Posterior vena cava (tissue), 2 donors: ENCODE measurements at regions of chr12 and their contacts with region 1.

Region 1: DNA sequence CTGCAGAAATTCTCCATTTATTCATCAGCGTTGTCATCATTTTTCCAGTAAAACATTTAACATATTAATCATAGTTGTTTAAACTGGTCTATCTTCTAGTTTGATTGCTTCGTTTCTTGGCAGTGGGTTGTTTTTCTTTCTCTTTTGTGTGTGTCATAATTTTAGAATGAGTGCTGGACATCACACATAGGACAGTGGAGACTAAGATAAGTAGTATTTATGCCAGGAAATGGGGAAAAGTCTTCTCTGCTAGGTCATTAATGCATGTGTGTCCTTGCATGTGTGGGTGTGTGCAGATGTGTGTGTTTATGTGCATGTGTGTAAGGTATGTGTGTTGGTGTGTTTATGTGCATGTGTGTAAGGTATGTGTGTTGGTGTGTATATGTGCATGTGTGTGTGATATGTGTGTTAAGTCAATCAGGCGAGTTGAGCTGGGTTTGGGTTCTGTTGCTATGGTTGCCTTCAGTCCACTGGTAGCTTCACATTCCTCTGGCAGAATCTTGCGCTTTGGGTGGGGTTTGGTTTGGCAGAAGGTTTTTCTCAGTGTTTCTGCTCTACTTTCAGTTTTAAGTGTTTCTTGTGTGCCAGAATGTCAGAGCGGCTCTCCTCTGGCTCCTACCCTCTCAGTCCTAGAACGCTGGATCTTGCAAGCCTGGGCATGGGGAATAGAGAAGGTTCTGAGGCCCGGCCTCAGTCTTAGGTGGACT is 7.8 kb upstream of the ADGRD1 start:
- DNase-seq: no peak

Region 2: DNA sequence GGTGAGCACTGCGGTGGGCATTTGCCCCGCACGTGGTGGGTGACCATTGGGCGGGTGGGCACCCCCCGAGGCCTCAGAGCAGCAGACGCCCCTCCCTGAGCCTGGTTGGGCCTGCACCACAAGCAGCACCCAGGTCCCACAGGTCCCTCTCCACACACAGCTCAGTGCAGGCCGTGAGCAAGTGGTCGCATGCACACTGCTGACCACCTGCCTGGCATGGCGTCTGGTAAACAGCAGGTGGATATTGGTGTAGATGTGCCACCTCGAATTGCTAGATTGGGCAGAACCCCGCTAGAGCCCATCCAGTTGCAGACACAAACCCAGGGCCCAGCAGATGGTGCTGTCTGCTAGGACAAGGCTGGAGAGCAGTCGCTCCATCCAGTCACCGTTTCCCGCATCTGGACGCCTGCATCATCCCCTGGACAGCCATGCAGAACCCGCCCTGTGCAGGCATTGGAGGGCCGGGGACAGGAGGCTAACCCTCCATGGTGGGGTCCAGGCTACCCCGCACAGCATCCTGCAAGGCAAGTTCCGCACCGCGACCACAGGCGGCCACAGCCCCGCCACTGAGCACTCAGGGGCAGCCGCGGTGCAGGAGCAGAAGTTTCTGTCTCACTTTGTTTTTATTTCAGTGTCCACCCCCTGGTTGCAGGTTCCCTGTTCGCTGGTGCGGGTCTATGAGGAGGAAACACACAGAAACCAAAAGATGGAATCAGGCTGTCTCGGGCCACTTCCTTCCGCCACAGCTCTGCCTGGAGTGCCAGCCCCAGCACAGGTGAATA is 184.2 kb before region 1 on chr12:
- intact Hi-C with region 1: loop called in 1 of 2 experiments (anchors 5 kb)
- DNase-seq: peak; percentile 81

Region 3: DNA sequence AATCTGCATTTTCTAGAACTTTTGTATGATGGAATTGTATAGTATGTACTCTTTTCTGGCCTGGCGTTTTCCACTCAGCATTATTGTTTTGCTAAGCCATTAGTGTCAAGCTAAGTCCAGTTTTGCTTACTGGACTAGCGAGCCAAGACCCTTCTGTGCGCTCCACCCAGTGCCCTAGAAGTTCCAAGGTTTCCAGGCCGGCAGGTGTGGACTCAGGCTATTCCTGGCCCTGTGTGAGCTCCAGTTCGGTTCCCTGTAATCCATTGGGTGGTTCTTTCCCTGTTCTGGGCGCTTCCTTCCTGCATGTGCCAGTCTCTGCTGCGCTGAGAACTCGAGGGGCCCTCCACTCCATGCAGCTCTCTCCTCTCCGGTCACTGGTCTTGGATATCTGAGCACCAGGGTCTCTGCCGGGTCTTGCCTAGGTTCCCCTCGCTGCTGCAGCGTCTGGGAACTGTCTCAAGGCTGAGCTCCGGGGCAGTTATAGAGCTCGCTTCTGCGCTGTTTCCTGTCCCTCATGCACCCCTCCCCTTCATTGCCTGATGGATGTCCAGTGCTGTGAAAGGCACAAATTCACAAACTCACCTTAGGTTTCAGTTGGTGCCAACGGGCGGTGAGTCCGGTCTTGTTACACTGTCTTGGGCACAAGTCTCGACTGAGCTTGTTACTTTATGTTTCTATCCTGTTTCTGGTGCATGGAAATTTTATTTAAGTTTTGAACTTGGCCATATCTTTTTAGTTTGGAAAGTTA is 108.6 kb after region 1 on chr12:
- intact Hi-C with region 1: loop called in 1 of 2 experiments (anchors 1 kb)
- DNase-seq: peak; percentile 46

Region 4: GRCh38 chr12:132804426-132804861 is 1858.5 kb after region 1 on chr12:
- intact Hi-C with region 1: no loop called
- DNase-seq: no peak